Esophagus muscularis mucosa (tissue), 4 donors: ENCODE measurements at regions of chr16 and their contacts with region 1.

Region 1: GRCh38 chr16:89449726-89450335 is 40.5 kb downstream of the ANKRD11 start:
- DNase-seq: no peak
- H3K4me3 ChIP-seq: no peak overlapping the region
- H3K27ac ChIP-seq: no peak overlapping the region
- H3K4me1 ChIP-seq: peaks cover 64 to 91% (median 86%) of the 10 kb centered on the region in 4 donors
- H3K27me3 ChIP-seq: no peaks in the 10 kb centered on the region
- CTCF ChIP-seq: no peak
- EP300 ChIP-seq: no peak
- POLR2A ChIP-seq: no peak

Region 2: GRCh38 chr16:89490387-89491237 is 40.8 kb after region 1 on chr16 and contains the start of gene ANKRD11:
- intact Hi-C with region 1: loop called (anchors 5 kb)
- DNase-seq: peak; percentile 100
- H3K4me3 ChIP-seq: peak within 1 kb of the TSS; percentile 75 to 98 (median 86)
- H3K27ac ChIP-seq: peak within 1 kb of the TSS; percentile 98 to 100 (median 99)
- H3K4me1 ChIP-seq: peaks cover 42 to 54% (median 50%) of the 10 kb centered on the region in 4 donors
- H3K27me3 ChIP-seq: no peaks in the 10 kb centered on the region
- CTCF ChIP-seq: peak in 1 of 3 experiments; percentile 20
- EP300 ChIP-seq: no peak
- POLR2A ChIP-seq: peak; percentile 67
- total RNA-seq, gene ANKRD11: 60.8 to 119 (median 105) TPM